GM10248 (cell line): ENCODE measurements at regions of chr13 and their contacts with region 1.

Region 1: GRCh38 chr13:113393563-113394338 is 29.8 kb upstream of the GRTP1 start:
- DNase-seq: peak; percentile 93
- CTCF ChIP-seq: peak; percentile 92

Region 2: GRCh38 chr13:112942689-112943308 is 451.0 kb before region 1 on chr13:
- CTCF ChIA-PET with region 1: interaction called, 48 read pairs
- POLR2A ChIA-PET with region 1: no interaction called
- DNase-seq: peak; percentile 92
- CTCF ChIP-seq: peak; percentile 98

Region 3: GRCh38 chr13:113378825-113379224 is 14.9 kb before region 1 on chr13:
- CTCF ChIA-PET with region 1: interaction called, 23 read pairs
- POLR2A ChIA-PET with region 1: no interaction called
- DNase-seq: no peak
- CTCF ChIP-seq: no peak

Region 4: GRCh38 chr13:114334305-114335053 is 940.7 kb after region 1 on chr13:
- CTCF ChIA-PET with region 1: no interaction called
- POLR2A ChIA-PET with region 1: no interaction called
- DNase-seq: no peak
- CTCF ChIP-seq: no peak